AG04450 (cell line): ENCODE measurements at regions of chr17 and their contacts with region 1.

Region 1: GRCh38 chr17:29219378-29220047 is 27.1 kb upstream of the CRYBA1 start:
- DNase-seq: peak; percentile 45
- H3K4me3 ChIP-seq: no peak overlapping the region
- H3K27ac ChIP-seq: no peak overlapping the region
- H3K27me3 ChIP-seq: no peaks in the 10 kb centered on the region
- CTCF ChIP-seq: peak; percentile 94

Region 2: DNA sequence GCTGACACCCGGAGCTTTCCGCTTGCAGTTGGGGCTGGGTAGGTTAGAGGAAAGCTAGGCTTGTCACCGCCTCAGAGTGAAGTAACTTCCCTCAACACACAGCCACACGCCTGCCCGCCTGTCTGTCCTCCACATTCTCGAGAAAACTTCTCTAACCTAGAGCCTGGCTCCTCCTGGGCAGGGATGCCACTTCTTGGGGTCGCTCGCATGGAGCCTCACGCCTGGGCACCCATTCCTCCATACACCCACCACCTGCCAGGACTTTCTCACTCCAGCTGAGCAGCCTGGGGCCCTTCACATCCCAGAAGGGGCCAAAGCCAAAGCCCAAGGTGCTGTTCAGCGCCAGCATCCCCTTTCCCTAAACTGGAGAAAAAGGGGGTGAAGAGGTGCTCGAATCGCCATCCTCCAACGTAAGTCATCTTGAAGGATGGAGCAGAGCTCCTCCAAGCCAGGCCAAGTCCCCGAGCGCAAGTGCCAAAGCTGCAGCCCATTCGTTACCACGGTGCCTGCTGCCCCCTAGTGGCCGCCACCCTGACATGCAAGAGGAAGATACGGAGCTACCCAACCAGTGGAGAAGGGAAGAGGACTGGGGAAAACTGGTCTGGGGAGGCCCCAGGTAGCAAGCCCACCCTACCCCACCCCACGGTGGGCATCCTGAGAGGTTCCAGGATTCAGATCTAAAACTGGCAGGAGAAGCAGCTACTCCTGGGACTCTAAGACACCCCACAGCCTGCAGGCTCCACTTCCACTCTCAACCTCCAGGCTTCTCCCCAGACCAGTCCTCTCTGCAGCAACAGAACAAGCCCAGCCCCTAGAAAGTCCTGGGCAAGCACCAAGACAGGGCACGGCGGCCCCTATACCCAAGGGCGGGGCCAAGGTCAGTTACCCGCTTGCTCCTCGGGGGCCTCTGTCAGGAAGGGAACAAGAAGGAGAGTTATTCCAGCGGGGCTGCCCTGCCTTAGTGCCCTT is 102.4 kb before region 1 on chr17:
- CTCF ChIA-PET with region 1: interaction called, 14 read pairs
- POLR2A ChIA-PET with region 1: no interaction called
- DNase-seq: no peak
- H3K4me3 ChIP-seq: no peak overlapping the region
- H3K27ac ChIP-seq: no peak overlapping the region
- H3K27me3 ChIP-seq: no peaks in the 10 kb centered on the region
- CTCF ChIP-seq: peak; percentile 83

Region 3: DNA sequence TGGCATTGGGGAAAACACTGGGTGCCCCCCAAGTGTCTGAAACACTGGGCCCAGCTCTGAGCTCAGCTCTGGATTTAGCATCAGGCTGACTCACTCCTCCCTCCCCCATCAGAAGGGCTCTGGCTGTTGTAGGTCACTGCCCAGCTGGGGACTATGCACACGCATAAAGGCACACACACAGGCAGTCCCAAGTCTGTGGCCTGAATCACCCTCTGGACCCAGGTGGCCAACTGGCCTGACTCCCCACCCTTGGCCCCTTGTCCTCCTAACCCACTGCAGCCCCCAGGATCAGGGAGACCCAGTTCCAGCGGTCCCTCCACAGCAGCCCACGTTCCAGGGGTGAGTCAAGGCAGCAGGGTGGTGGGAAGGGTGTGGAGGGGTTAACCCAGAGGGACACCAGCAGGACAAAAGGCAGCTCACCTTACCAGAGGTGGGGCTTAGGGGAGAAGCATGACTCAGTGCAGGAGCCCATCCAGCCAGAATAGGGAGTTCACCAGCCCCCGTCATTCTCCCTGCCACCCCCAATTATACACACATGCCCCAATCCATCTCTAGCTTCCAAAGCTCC is 86.3 kb before region 1 on chr17:
- CTCF ChIA-PET with region 1: interaction called, 12 read pairs
- POLR2A ChIA-PET with region 1: no interaction called
- DNase-seq: no peak
- H3K4me3 ChIP-seq: no peak overlapping the region
- H3K27ac ChIP-seq: peak overlapping the region; percentile 96
- H3K27me3 ChIP-seq: no peaks in the 10 kb centered on the region
- CTCF ChIP-seq: no peak

Region 4: GRCh38 chr17:29148790-29149430 is 70.6 kb before region 1 on chr17:
- CTCF ChIA-PET with region 1: interaction called, 158 read pairs
- POLR2A ChIA-PET with region 1: interaction called, 3 read pairs
- DNase-seq: peak; percentile 79
- H3K4me3 ChIP-seq: peak overlapping the region; percentile 56
- H3K27ac ChIP-seq: peak overlapping the region; percentile 47
- H3K27me3 ChIP-seq: no peaks in the 10 kb centered on the region
- CTCF ChIP-seq: peak; percentile 88

Region 5: GRCh38 chr17:29205047-29205446 is 14.5 kb before region 1 on chr17:
- CTCF ChIA-PET with region 1: interaction called, 26 read pairs
- POLR2A ChIA-PET with region 1: no interaction called
- DNase-seq: no peak
- H3K4me3 ChIP-seq: no peak overlapping the region
- H3K27ac ChIP-seq: no peak overlapping the region
- H3K27me3 ChIP-seq: peaks cover 8% of the 10 kb centered on the region
- CTCF ChIP-seq: no peak

Region 6: GRCh38 chr17:29241015-29241963 is 21.8 kb after region 1 on chr17:
- CTCF ChIA-PET with region 1: interaction called, 33 read pairs
- POLR2A ChIA-PET with region 1: interaction called, 4 read pairs
- DNase-seq: peak; percentile 86
- H3K4me3 ChIP-seq: no peak overlapping the region
- H3K27ac ChIP-seq: peak overlapping the region; percentile 92
- H3K27me3 ChIP-seq: no peaks in the 10 kb centered on the region
- CTCF ChIP-seq: peak; percentile 8; the same call in 1 of the 2 replicates

Region 7: DNA sequence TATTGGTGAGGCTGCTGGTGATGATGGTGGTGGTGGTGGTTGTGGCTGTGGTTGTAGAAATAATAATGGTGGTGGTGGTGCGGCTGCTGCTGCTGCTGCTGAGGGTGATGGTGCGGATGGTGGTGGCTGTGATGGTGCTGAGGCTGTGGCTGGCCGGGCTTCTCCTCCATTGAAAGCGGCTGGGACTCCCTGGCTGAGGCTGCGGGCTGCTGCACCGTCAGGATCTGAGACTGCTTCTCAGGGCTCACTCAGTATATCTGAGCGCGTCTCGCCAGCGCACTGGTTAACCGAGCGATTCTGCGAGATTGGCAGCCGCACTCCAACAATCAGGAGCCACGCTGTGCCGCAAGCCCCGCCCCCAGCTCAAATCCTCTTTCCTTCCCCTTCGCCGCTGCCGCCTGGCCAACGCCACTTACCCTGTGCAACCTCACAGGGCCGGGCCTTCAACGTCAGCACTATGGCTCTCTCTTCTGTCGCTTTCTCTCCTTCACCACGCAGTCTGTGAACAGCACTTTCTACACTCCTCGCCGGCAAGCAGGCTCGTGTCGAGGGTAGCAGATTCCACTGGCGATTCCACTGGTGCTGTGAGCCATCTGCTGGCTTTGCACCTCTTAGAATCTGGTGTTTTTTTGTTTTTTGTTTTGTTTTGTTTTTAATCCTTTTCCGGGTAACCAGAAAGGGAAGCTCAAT is 74.5 kb after region 1 on chr17 and contains the start of gene NUFIP2:
- CTCF ChIA-PET with region 1: interaction called, 40 read pairs
- POLR2A ChIA-PET with region 1: interaction called, 4 read pairs
- DNase-seq: peak; percentile 97
- H3K4me3 ChIP-seq: peak within 1 kb of the TSS; percentile 98
- H3K27ac ChIP-seq: peak within 1 kb of the TSS; percentile 97
- H3K27me3 ChIP-seq: no peaks in the 10 kb centered on the region
- CTCF ChIP-seq: 0 out of 2 replicates have a peak, but pooled peaks have one; percentile 4
- polyA plus RNA-seq, gene NUFIP2: 13.6 and 14.7 TPM in 2 replicates